ENCODE measurements at regions of chr17 and their contacts with region 1.

Region 1: DNA sequence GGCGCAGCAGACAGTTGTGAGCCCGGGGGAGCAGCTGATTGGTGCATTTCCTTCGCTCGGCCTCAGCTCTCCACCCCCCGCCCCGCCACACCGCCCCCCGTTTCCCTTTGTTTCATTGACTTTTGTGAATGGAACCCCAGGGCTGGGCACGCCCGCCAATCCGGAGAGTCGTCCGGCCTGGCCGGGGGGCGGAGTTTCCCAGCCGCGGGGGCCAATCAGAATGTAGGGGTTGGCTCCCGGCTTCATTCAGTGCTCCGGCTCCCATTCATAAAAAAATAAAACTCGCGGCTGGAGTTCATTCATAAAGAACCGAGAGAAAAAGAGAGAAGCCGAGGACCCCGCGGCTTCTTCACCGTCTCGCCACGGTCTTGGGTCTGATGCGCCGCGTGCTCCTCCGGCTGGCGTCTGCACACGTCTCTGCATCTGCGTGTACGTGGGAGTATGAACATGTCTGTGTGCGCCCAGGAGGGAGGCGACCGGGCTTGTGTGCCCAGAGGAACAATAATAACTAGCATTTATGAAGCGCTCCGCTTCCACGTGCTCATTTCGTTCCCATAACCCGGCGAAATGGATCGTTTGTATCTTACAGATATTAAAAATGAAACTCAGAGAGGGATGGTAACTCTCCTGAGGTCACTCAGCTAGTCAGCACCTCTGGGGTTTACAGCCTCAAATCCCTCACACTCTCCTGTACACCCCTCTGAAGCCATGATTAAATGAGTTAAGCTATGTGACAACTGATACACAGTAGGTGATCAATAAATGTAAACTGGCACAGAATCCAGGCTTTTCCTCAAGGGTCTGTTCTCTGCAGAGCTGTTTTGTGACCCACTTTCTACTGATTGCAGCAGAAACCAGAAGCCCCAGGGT is at the start of gene ETV4:
- DNase-seq: peak; percentile 77 to 90 (median 85)
- ATAC-seq: peak; percentile 92 to 94 (median 93)
- H3K4me3 ChIP-seq: peak within 1 kb of the TSS; percentile 44 to 62
- H3K4me3 Mint-ChIP-seq: peak within 1 kb of the TSS; percentile 78 to 89 (median 81)
- H3K27ac ChIP-seq: no peak within 1 kb of the TSS
- H3K27ac Mint-ChIP-seq: no peak within 1 kb of the TSS
- H3K4me1 ChIP-seq: peaks cover 6 to 29% of the 10 kb centered on the region in 2 experiments
- H3K4me1 Mint-ChIP-seq: peaks cover 22 to 27% (median 23%) of the 10 kb centered on the region in 3 donors
- H3K27me3 ChIP-seq: peaks cover 14 to 82% of the 10 kb centered on the region in 2 experiments
- H3K27me3 Mint-ChIP-seq: peaks cover 48 to 66% of the 10 kb centered on the region in 2 donors
- total RNA-seq, gene ETV4: 0.41 to 0.46 (median 0.44) TPM in 3 of 5 donors, not detected in the others

Region 2: DNA sequence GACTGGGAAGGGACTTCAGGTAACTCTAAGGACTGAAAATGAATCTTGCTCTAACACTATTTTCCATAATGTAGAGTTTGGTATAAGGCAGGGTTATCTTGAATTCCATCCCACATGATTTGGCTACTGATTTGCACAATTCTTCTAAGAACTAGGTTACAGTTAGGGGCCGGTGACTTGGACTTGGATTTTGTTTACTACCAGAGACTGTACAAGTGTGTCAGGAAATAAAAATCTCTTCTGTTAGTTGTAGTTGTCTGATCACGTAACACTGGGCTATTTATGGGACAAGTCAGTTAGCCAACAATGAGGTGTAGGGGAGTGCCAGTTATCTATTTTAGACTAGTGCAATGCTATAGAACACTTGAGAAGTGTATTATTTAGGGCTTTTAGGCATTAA is 1312.6 kb before region 1 on chr17:
- CTCF ChIA-PET with region 1: interaction called in 1 of 2 experiments, 10 read pairs
- POLR2A ChIA-PET with region 1: no interaction called
- DNase-seq: no peak
- ATAC-seq: no peak
- H3K4me3 ChIP-seq: no peak overlapping the region
- H3K4me3 Mint-ChIP-seq: no peak overlapping the region
- H3K27ac ChIP-seq: no peak overlapping the region
- H3K27ac Mint-ChIP-seq: peak overlapping the region; percentile 60 to 69
- H3K4me1 ChIP-seq: peaks cover 0 to 13% of the 10 kb centered on the region in 2 experiments
- H3K4me1 Mint-ChIP-seq: peaks cover 45 to 53% (median 53%) of the 10 kb centered on the region in 3 donors
- H3K27me3 ChIP-seq: no peaks in the 10 kb centered on the region
- H3K27me3 Mint-ChIP-seq: no peaks in the 10 kb centered on the region

Region 3: GRCh38 chr17:43344685-43345084 is 201.9 kb before region 1 on chr17:
- CTCF ChIA-PET with region 1: no interaction called
- POLR2A ChIA-PET with region 1: interaction called in 1 of 2 experiments, 15 read pairs
- DNase-seq: no peak
- ATAC-seq: no peak
- H3K4me3 ChIP-seq: no peak overlapping the region
- H3K4me3 Mint-ChIP-seq: no peak overlapping the region
- H3K27ac ChIP-seq: no peak overlapping the region
- H3K27ac Mint-ChIP-seq: no peak overlapping the region
- H3K4me1 ChIP-seq: no peaks in the 10 kb centered on the region
- H3K4me1 Mint-ChIP-seq: no peaks in the 10 kb centered on the region
- H3K27me3 ChIP-seq: no peaks in the 10 kb centered on the region
- H3K27me3 Mint-ChIP-seq: peaks cover 0 to 3% of the 10 kb centered on the region in 2 donors

Region 4: DNA sequence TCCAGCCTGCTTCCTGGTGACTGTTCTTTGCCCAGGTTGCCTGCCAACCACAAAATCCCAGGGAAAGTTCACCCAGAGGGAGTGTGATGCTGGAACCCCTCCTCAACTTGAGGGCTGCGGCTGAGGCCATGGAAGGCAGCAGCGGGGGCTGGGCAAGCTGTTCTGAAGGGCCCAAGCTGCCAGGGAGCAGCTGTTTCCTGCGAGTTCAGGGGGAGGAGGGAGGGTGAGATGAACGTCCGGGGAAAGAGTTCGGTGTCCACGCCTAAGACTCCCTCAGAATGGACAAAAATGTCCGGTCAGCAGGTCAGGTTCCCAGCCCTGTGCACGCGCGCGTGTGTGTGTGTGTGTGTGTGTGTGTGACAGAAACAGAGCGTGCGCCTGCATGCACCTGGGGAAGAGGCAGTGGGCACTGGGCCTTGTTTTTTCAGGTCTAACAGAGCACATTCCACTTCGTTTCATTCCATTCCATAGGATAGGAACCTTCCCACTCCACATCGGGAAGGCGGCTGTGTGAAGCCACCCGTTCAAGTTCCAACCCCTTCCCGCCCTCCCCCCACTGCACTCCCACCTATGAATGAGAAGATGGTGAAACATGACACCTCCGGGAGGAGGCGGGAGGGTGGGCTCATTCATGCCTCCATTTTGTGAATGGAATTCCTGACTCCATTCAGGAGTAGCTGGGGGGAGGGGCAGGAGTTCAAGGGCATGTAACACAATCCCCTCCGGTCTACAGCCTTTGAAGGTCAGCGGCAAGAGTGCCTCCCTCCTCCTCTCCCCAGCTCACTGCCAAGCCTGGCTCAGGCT is 16.1 kb before region 1 on chr17:
- CTCF ChIA-PET with region 1: no interaction called
- POLR2A ChIA-PET with region 1: no interaction called
- DNase-seq: no peak
- ATAC-seq: peak in 1 of 4 experiments; percentile 19
- H3K4me3 ChIP-seq: no peak overlapping the region
- H3K4me3 Mint-ChIP-seq: no peak overlapping the region
- H3K27ac ChIP-seq: no peak overlapping the region
- H3K27ac Mint-ChIP-seq: no peak overlapping the region
- H3K4me1 ChIP-seq: peaks cover 0 to 5% of the 10 kb centered on the region in 2 experiments
- H3K4me1 Mint-ChIP-seq: peaks cover 0 to 2% (median 2%) of the 10 kb centered on the region in 3 donors
- H3K27me3 ChIP-seq: no peaks in the 10 kb centered on the region
- H3K27me3 Mint-ChIP-seq: no peaks in the 10 kb centered on the region